Activated naive CD4-positive, alpha-beta T cell treated with anti-CD3 and anti-CD28 coated beads for 36 hours (primary cell): ENCODE measurements at regions of chr4 and their contacts with region 1.

Region 1: GRCh38 chr4:173013232-173013930 is 155.2 kb upstream of the GALNT7 start:
- DNase-seq: peak; percentile 67
- H3K4me3 Mint-ChIP-seq: no peak overlapping the region
- H3K27ac Mint-ChIP-seq: no peak overlapping the region
- H3K4me1 Mint-ChIP-seq: no peaks in the 10 kb centered on the region
- H3K27me3 Mint-ChIP-seq: no peaks in the 10 kb centered on the region

Region 2: GRCh38 chr4:172794307-172794703 is 219.1 kb before region 1 on chr4:
- CTCF ChIA-PET with region 1: no interaction called
- intact Hi-C with region 1: no loop called
- DNase-seq: no peak
- H3K4me3 Mint-ChIP-seq: no peak overlapping the region
- H3K27ac Mint-ChIP-seq: no peak overlapping the region
- H3K4me1 Mint-ChIP-seq: no peaks in the 10 kb centered on the region
- H3K27me3 Mint-ChIP-seq: no peaks in the 10 kb centered on the region

Region 3: GRCh38 chr4:172962564-172963353 is 50.6 kb before region 1 on chr4:
- CTCF ChIA-PET with region 1: no interaction called
- intact Hi-C with region 1: no loop called
- DNase-seq: no peak
- H3K4me3 Mint-ChIP-seq: no peak overlapping the region
- H3K27ac Mint-ChIP-seq: no peak overlapping the region
- H3K4me1 Mint-ChIP-seq: no peaks in the 10 kb centered on the region
- H3K27me3 Mint-ChIP-seq: peaks cover 26% of the 10 kb centered on the region

Region 4: GRCh38 chr4:173025131-173025530 is 11.8 kb after region 1 on chr4:
- CTCF ChIA-PET with region 1: interaction called, 33 read pairs
- intact Hi-C with region 1: no loop called
- DNase-seq: peak; percentile 43
- H3K4me3 Mint-ChIP-seq: no peak overlapping the region
- H3K27ac Mint-ChIP-seq: no peak overlapping the region
- H3K4me1 Mint-ChIP-seq: peaks cover 4% of the 10 kb centered on the region
- H3K27me3 Mint-ChIP-seq: no peaks in the 10 kb centered on the region

Region 5: GRCh38 chr4:173252024-173252935 is 238.9 kb after region 1 on chr4:
- CTCF ChIA-PET with region 1: interaction called, 64 read pairs
- intact Hi-C with region 1: loop called (anchors 1 kb)
- DNase-seq: peak; percentile 48
- H3K4me3 Mint-ChIP-seq: no peak overlapping the region
- H3K27ac Mint-ChIP-seq: no peak overlapping the region
- H3K4me1 Mint-ChIP-seq: peaks cover 19% of the 10 kb centered on the region
- H3K27me3 Mint-ChIP-seq: no peaks in the 10 kb centered on the region

Region 6: GRCh38 chr4:173264684-173265185 is 251.4 kb after region 1 on chr4:
- CTCF ChIA-PET with region 1: interaction called, 13 read pairs
- intact Hi-C with region 1: no loop called
- DNase-seq: peak; percentile 57
- H3K4me3 Mint-ChIP-seq: peak overlapping the region; percentile 15
- H3K27ac Mint-ChIP-seq: no peak overlapping the region
- H3K4me1 Mint-ChIP-seq: peaks cover 18% of the 10 kb centered on the region
- H3K27me3 Mint-ChIP-seq: no peaks in the 10 kb centered on the region

Region 7: DNA sequence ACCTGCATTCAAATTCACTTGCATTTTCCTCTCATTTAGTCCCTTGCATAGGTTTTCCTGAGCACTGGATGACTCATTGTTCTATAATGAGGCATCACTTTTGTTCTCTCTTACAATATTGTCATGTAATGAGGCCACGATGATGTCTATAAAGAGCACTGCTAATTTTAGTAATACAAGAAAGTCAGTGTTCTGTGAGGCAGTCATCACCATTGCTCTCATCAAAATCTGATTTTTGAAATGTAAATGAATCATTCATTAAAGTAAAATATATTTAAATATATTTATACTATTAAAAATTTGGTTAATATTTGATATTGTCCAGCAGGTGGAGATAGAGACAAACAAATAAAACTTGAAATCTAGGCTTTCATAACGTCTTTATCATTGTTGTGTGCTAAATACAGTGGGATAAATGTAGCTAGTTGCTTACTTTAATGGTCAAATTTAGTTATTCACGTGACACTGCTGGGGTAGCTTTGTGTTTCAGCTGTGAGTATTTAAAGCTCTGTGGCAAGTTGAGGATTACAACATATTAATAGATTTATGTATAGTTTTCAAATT is 305.3 kb after region 1 on chr4:
- CTCF ChIA-PET with region 1: interaction called, 5 read pairs
- intact Hi-C with region 1: loop called (anchors 1 kb)
- DNase-seq: no peak
- H3K4me3 Mint-ChIP-seq: no peak overlapping the region
- H3K27ac Mint-ChIP-seq: no peak overlapping the region
- H3K4me1 Mint-ChIP-seq: peaks cover 11% of the 10 kb centered on the region
- H3K27me3 Mint-ChIP-seq: no peaks in the 10 kb centered on the region

Region 8: DNA sequence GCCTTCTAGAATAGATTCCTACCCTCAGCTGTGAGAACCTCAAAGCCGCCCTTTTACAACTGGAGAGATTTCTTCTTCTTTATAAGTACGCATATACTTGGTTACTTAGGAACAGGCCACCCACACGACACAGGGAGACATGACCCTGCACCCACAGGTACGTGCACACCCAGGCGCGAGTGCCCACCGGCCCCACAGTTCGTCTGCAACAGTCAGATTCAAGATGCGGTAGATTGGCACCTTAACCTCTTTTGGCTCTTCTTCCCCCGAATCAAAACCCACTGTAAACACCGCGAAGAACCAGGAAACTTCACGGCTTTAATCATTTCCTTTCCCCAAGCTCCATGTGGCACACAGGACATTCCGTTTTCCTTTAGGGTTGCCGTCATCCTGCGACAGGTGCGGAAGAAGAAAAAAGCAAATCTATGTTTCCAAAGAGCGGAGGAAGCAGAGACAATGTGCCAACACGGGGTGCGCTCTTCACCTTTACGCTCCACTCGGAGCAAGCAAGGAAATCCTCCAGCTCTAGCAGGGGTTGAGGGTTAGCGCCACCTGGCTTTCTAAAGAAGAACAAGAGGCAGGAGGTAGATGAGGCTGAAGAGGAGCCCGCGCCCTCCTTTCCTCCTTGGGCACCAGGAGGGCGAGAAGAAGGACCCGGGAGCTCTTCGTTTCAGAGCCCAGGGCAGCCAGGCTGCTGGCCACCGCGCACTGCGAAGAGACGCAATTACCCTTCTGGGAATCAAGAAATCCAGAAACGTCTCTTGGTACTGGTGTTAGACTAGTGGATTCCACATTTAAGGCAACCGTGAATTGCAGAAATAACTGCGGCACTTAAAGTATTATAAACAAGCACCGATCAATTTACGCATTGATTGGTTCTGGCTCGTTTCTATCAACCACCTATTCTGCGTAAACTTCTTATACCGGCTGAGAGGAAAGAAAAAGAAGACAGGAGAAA is 480.9 kb after region 1 on chr4:
- CTCF ChIA-PET with region 1: interaction called, 12 read pairs
- intact Hi-C with region 1: loop called (anchors 1 kb)
- DNase-seq: peak; percentile 75
- H3K4me3 Mint-ChIP-seq: peak overlapping the region; percentile 64
- H3K27ac Mint-ChIP-seq: no peak overlapping the region
- H3K4me1 Mint-ChIP-seq: peaks cover 10% of the 10 kb centered on the region
- H3K27me3 Mint-ChIP-seq: peaks cover 32% of the 10 kb centered on the region